ENCODE measurements at regions of chr4 and their contacts with region 1.

Region 1: DNA sequence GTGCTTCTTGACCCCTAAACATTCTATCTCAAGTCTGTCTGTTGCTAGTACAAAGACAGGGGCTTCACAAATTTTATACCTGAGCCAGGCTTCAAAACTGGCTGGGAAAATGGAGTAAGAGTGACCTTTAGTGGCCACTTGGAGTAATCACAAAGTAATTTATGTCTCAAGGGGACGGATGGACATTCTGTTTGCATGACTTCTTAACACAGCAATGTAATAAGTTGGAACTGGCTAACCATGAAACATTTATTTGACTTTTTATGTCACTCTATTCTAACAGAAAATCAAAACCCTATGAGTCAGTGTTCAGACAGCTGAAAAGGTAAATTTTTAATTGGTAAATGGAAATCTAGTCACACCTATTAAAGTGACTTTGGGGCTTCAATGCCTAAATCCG is 600.6 kb downstream of the ANKRD50 start:
- DNase-seq: peak in 1 of 2 donors; percentile 32
- ATAC-seq: peak in 7 of 8 donors; percentile 82 to 95 (median 91)
- H3K4me3 ChIP-seq: peak overlapping the region in 1 of 10 donors; percentile 9
- H3K27ac ChIP-seq: peak overlapping the region in 6 of 10 donors; percentile 1 to 59 (median 36)
- H3K4me1 ChIP-seq: peaks cover 0 to 18% (median 10%) of the 10 kb centered on the region in 9 donors
- H3K27me3 ChIP-seq: no peaks in the 10 kb centered on the region
- CTCF ChIP-seq: peak; percentile 57 to 87 (median 75)

Region 2: DNA sequence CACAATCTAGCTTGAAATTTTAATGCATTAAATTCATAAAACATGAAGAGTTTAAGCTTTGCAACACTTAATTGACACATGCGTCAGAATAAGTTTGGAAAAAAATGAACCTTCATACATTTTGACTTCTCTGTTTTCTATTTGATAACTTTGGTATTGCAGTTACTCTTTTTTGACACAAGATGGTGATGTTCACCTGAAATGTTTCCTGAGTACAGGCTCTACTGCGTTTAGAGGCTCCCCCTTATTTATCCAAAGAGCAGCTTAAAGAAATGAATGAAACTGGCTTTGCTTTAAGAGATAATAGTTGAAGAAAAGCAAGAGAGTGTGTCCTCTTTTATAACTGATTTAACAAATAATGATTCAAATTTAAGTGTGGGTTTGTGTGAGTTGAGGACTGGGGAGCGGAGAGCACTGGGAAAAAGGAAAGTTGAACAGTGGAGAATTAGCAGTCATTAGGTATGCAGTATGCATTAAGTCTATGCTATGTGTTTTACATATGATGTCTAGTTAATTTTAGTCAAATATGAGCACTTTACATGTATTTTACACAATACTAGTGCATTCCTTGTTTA is 1008.9 kb before region 1 on chr4:
- intact Hi-C with region 1: loop called in 9 of 10 experiments (anchors 1 to 10 kb)
- DNase-seq: no peak
- ATAC-seq: peak in 6 of 8 donors; percentile 58 to 78 (median 72)
- H3K4me3 ChIP-seq: no peak overlapping the region
- H3K27ac ChIP-seq: peak overlapping the region in 1 of 10 donors; percentile 16
- H3K4me1 ChIP-seq: peaks cover 0 to 15% (median 4%) of the 10 kb centered on the region in 9 donors
- H3K27me3 ChIP-seq: no peaks in the 10 kb centered on the region
- CTCF ChIP-seq: peak; percentile 44 to 86 (median 78)

Region 3: DNA sequence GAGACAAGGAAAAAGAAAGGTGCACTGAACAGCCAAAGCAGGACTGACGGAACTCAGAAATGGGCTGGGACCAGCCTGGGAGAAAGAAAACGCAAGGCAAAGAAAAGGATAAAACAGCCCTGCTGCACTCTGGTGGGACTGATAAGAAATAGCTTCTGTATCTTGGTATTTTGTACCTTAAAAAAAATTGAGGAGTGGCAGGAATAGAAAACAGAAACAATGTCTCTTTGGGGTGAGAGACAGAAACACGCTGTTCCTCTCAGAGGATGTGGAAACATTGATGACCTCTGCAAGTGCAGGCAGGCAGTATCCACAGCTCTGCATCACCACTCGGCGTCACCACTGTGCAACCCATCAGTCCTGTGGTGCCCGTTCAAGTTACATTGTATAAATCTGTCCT is 867.8 kb before region 1 on chr4:
- intact Hi-C with region 1: loop called in 1 of 10 experiments (anchors 5 kb)
- DNase-seq: peak; percentile 51 to 65
- ATAC-seq: peak; percentile 75 to 98 (median 96)
- H3K4me3 ChIP-seq: peak overlapping the region in 1 of 10 donors; percentile 15
- H3K27ac ChIP-seq: peak overlapping the region in 2 of 10 donors; percentile 9 to 68
- H3K4me1 ChIP-seq: peaks cover 2 to 48% (median 36%) of the 10 kb centered on the region in 9 donors
- H3K27me3 ChIP-seq: no peaks in the 10 kb centered on the region
- CTCF ChIP-seq: peak in 7 of 9 donors; percentile 22 to 72 (median 45)

Region 4: GRCh38 chr4:123555233-123555806 is 556.6 kb before region 1 on chr4:
- intact Hi-C with region 1: loop called in 5 of 10 experiments (anchors 10 kb)
- DNase-seq: peak; percentile 75 to 87
- ATAC-seq: peak; percentile 76 to 93 (median 90)
- H3K4me3 ChIP-seq: peak overlapping the region in 2 of 10 donors; percentile 3 to 12
- H3K27ac ChIP-seq: peak overlapping the region; percentile 0 to 79 (median 66)
- H3K4me1 ChIP-seq: peaks cover 0 to 43% (median 27%) of the 10 kb centered on the region in 9 donors
- H3K27me3 ChIP-seq: no peaks in the 10 kb centered on the region
- CTCF ChIP-seq: no peak

Region 5: DNA sequence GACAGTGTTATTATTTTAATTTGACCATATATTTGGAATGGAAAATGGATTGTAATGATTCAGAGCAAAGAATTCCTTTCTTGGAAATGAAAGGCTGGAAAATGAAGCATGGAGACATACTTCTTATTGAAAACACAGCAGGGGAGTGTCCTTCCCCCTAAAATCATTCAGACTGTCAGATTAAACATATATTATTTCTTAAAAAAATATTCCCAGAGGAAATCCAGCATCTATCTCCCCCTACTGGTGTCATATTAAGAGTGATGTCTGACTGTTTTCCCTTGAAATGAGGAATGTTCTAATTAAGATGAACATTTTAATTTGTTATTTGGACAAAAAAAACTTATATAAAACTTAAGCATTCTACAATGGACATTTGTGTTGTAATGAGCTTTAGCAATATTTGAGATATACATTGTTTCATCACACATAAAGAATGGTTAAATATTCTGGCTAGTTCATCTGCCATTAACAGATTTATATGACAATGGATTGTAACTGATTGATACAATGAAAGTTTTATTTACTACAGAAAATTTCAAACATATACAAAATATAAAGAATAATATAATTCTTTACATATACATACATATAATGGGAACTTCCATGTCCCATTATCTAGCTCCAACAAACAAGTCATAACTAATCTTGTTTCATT is 450.7 kb before region 1 on chr4:
- intact Hi-C with region 1: loop called in 2 of 10 experiments (anchors 10 kb)
- DNase-seq: no peak
- ATAC-seq: no peak
- H3K4me3 ChIP-seq: no peak overlapping the region
- H3K27ac ChIP-seq: no peak overlapping the region
- H3K4me1 ChIP-seq: no peaks in the 10 kb centered on the region
- H3K27me3 ChIP-seq: no peaks in the 10 kb centered on the region
- CTCF ChIP-seq: peak in 8 of 9 donors; percentile 34 to 70 (median 55)

Region 6: GRCh38 chr4:123776254-123776653 is 335.7 kb before region 1 on chr4:
- intact Hi-C with region 1: loop called in 9 of 10 experiments (anchors 2 to 10 kb)
- DNase-seq: no peak
- ATAC-seq: no peak
- H3K4me3 ChIP-seq: no peak overlapping the region
- H3K27ac ChIP-seq: peak overlapping the region in 3 of 10 donors; percentile 41 to 66 (median 65)
- H3K4me1 ChIP-seq: peaks cover 0 to 22% (median 8%) of the 10 kb centered on the region in 9 donors
- H3K27me3 ChIP-seq: no peaks in the 10 kb centered on the region
- CTCF ChIP-seq: no peak

Region 7: DNA sequence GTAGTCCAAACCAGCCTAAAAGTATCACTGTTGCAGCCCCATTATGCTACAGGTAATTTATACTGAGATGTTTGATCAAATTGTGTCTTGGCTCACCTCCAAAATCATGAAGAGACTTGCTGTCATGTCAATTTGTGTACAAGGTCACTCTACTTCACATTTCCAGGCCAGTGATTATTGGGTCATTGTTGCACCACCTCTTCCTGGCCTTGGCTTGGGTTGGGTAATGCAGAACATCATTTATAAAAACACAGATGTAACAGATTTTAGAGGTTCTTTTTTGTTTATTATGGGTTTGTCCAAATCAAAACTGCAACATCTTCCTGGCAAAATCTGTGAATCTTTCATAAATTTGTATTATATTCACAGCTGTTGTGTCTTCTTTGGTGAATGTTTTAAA is 141.2 kb after region 1 on chr4:
- intact Hi-C with region 1: loop called in 1 of 10 experiments (anchors 10 kb)
- DNase-seq: no peak
- ATAC-seq: no peak
- H3K4me3 ChIP-seq: no peak overlapping the region
- H3K27ac ChIP-seq: no peak overlapping the region
- H3K4me1 ChIP-seq: no peaks in the 10 kb centered on the region
- H3K27me3 ChIP-seq: no peaks in the 10 kb centered on the region
- CTCF ChIP-seq: no peak

Measured in heart right ventricle (tissue), 16 donors.